AG04449 (cell line): ENCODE measurements at regions of chr17 and their contacts with region 1.

Region 1: DNA sequence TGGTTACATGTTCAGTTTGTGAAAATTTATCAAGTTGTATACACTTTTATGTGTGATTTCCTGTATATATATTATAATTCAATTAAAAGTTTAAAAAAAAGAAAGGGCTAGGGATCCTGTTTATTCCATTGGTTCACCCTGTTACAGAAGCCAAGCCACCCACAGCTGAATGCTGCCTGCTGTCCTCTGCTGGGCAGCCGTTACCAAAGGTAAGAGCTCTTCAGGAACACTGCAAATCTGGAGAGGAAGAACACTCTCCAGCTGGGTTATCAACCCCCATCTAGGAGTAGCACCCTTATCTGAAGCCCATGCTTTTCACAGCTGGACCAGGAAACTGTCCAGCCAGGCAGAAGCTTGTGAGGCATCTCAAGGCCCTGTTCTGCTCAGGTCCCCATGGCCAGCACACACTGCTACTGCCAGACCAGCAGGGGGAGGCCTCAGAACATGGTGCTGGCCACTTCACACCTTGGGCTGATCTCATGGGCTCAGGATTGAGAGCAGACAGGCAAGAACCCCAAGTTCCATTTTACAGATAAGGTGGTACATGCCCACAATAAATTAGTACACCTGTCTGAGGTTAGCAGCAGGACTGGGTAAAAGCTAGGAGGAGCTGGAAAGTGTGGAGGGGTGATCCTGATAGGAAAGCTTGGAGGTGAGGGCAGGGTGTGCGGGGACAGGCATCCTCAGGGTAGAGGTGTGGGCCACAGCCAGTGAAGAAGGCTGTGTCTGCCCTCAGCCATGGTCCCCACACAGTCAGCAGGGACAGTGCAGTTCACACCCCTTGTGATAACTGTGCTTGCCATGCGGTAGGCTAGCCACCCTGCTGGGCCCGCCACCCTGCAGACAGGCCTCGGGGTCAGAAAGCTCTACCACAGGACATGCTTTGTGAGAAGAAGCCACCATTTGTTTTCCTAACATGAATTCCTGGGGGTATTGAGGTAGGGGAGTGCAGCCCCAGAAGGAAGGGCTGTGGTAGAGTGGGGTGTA is 54.3 kb upstream of the SREBF1 start:
- DNase-seq: no peak
- H3K4me3 ChIP-seq: no peak overlapping the region
- CTCF ChIP-seq: peak; percentile 91

Region 2: DNA sequence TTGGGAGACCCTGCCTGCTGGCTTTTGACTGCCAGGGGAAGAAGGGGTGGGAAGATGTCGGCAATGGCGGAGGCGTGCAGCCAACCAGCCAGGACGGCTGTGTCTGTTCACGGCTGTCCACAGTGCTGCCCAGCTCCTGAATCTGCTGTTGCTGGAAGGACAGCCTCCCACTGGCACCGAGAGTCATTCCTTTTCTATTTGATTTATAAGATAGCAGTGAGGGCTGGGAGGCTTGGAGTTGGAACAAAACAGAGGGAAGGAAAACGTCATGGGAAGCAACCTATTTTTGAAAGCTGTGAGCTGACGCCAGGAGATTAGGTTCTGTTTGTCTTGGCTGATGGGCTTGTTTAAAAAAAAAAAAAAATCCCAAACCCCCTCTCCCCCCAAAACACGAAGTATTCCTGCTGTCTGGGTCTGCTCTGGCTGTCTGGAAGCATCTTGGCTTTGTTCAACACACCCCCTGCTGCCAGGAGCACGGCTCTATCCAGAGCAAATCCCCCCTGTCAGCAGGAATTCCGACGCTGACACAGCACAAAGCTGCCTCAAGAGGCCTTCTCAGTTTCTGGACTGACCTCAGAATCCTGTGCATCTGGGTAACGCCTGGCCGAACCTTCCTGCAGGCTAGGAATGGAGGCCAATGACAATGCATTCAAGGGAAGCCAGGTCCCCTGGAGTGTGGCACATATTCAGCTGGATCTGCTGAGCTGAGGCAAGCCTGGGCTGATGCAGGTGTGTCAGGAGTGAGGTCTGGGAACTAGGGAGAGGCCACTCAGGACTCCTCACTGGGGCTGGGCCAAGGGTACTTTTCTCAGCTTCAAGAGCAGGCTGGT is 13.3 kb before region 1 on chr17:
- CTCF ChIA-PET with region 1: interaction called, 38 read pairs
- POLR2A ChIA-PET with region 1: no interaction called
- DNase-seq: peak; percentile 71
- H3K4me3 ChIP-seq: peak overlapping the region; percentile 13; the same call in 1 of the 2 replicates
- CTCF ChIP-seq: no peak

Region 3: GRCh38 chr17:17906418-17907215 is 15.6 kb after region 1 on chr17:
- CTCF ChIA-PET with region 1: interaction called, 51 read pairs
- POLR2A ChIA-PET with region 1: no interaction called
- DNase-seq: no peak
- H3K4me3 ChIP-seq: no peak overlapping the region
- CTCF ChIP-seq: no peak

Region 4: DNA sequence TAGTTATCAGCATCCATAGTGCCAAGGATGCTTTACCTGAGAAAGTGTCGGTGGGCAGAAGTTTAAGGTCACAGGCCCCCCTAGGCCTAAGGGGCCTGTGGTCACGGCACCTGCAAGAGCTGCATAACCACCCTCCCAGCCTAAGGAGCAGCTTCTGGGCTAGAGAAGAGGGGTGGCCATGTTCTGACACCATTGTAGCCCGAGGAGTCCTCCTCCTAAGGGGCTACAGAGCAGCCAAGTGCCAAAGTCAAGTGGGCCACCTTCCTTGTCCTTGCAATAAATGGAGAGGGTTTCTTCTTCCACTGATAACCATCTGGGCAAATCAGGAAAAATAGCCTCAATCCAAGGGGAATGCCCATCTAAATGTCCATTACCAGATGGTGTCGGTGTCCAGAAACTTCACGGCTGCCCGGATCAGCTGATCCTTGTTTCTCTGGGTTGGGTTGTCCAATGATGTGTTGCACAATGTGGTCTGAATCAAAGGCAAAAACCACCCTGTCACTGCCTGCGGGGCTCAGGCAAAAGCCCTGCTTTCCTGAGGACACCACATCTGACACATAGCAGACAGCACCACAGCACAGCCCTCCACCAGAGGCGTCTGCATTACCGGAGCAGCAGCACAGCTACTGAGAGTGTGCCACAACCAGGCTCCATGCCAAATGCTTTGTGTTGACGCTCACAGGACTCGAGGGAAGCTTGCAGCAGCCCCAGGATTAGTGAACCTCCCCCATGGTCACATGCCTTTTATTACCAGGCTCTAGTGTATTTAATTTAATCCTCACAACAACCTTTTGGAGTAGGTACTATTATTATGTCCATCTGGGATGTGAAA is 135.1 kb after region 1 on chr17:
- CTCF ChIA-PET with region 1: interaction called, 167 read pairs
- POLR2A ChIA-PET with region 1: no interaction called
- DNase-seq: peak; percentile 49
- H3K4me3 ChIP-seq: no peak overlapping the region
- CTCF ChIP-seq: peak; percentile 8

Region 5: DNA sequence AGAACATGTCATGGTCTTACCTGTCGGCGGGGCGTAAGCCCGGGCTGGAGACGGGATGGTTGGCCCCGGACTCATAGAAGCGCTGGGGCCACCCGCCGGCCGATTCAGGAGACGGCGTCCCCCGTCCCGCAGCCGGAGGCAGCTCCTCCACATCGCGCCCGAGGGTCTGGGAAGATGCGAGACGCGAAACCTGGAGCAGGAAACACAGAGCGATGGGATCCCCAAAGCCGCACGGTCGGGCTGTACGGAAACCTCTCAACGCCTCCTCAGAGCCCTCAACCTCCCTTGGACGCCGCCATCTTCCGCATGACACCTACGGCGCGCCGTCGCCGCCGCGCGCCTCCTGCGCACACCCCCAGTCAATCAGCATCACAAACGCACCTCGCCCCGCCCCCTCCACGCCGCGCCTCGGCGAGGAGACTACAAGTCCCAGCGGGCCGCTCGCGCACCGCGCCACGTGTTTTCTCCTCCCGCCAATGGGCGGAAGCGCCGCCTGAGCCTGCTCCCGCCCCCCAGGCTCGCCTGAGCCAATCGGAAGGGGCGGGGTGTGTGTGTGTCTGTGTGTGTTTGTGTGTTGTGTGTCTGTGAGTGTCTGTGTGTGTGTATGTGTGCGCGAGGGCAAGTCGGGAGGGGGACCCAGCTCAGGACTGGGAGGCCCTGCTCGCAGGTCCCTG is 147.9 kb after region 1 on chr17 and contains the starts of genes ATPAF2 and GID4:
- CTCF ChIA-PET with region 1: interaction called, 167 read pairs
- POLR2A ChIA-PET with region 1: no interaction called
- DNase-seq: peak; percentile 89
- H3K4me3 ChIP-seq: peak within 1 kb of the TSS; percentile 85
- CTCF ChIP-seq: peak; percentile 6

Region 6: DNA sequence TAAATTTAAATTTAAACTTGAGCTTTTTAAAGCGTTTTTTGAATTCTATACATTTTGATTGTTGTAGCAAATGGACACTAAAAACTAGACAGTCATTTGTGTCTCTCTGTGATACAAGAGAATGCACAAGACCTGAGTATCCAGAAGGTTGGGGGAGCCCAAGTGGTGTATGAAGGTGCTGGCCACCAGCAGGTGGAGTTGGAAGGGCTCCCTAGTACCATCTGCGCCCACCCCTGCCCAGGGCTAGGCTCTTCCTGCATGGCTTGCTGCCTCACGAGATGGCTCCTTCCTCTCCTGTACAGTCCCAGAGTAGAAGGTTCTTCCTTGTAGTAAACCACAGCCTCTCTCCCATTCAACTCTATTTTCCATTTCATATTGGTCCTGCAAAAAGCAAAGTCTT is 165.1 kb after region 1 on chr17:
- CTCF ChIA-PET with region 1: no interaction called
- POLR2A ChIA-PET with region 1: no interaction called
- DNase-seq: no peak
- H3K4me3 ChIP-seq: no peak overlapping the region
- CTCF ChIP-seq: no peak